PC-3 (cell line): ENCODE measurements at regions of chr4 and their contacts with region 1.

Region 1: DNA sequence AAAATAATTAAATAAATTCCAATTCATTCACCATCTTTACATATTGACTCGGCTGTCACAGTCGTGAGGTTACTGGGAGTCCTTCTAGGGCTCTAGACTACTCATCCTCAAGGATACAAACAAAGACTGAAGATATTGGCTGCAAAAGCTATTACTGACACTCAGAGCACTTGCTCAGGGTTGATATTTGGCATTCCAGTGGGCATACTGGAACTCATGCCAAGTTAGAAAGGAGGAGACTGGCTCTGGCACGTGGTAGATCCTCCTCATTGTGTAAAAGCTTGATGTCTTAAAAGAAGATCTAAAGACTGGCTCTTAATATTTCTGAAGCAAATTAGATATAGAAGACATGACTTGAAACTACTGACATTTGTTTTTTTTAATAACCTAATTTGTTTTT is 172.7 kb downstream of the GPM6A start:
- DNase-seq: peak; percentile 31
- ATAC-seq: no peak
- H3K4me3 ChIP-seq: no peak overlapping the region
- H3K27ac ChIP-seq: no peak overlapping the region
- H3K4me1 ChIP-seq: peaks cover 25% of the 10 kb centered on the region
- H3K27me3 ChIP-seq: no peaks in the 10 kb centered on the region
- CTCF ChIP-seq: no peak

Region 2: DNA sequence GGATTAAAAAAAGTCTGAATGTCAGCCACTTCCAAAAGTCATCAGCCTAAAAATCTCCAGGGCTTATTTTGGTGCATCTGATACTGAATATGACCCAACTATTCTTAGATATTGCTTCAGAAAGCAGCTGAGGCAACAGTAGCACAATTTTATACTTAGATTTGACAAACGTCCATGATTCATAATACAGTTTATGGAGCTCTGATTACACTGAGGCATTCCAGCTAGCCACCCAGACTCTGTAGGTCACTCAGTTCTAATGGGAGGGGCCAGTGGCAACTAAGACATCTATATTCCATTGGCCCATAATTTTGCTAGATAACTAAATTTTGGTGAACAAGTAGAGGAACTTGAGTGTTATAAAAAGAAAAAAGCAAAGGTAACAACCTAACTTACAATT is 545.7 kb after region 1 on chr4:
- CTCF ChIA-PET with region 1: no interaction called
- POLR2A ChIA-PET with region 1: no interaction called
- intact Hi-C with region 1: loop called (anchors 5 kb)
- DNase-seq: peak; percentile 44
- ATAC-seq: peak; percentile 73
- H3K4me3 ChIP-seq: no peak overlapping the region
- H3K27ac ChIP-seq: no peak overlapping the region
- H3K4me1 ChIP-seq: no peaks in the 10 kb centered on the region
- H3K27me3 ChIP-seq: no peaks in the 10 kb centered on the region
- CTCF ChIP-seq: no peak